ENCODE measurements at regions of chr14 and their contacts with region 1.

Region 1: GRCh38 chr14:96584199-96584906 is 82.2 kb downstream of the PAPOLA start:
- DNase-seq: peak in 1 of 2 experiments; percentile 29
- H3K4me3 ChIP-seq: no peak overlapping the region
- H3K27ac ChIP-seq: no peak overlapping the region
- H3K4me1 ChIP-seq: no peaks in the 10 kb centered on the region
- H3K27me3 ChIP-seq: peaks cover 13% of the 10 kb centered on the region; the same call in 1 of the 2 replicates
- CTCF ChIP-seq: peak; percentile 69

Region 2: GRCh38 chr14:96735526-96735925 is 151.2 kb after region 1 on chr14:
- CTCF ChIA-PET with region 1: no interaction called
- POLR2A ChIA-PET with region 1: no interaction called
- intact Hi-C with region 1: loop called (anchors 10 kb)
- DNase-seq: no peak
- H3K4me3 ChIP-seq: no peak overlapping the region
- H3K27ac ChIP-seq: no peak overlapping the region
- H3K4me1 ChIP-seq: no peaks in the 10 kb centered on the region
- H3K27me3 ChIP-seq: peaks cover 89% of the 10 kb centered on the region
- CTCF ChIP-seq: no peak